ENCODE measurements at regions of chr15 and their contacts with region 1.

Region 1: DNA sequence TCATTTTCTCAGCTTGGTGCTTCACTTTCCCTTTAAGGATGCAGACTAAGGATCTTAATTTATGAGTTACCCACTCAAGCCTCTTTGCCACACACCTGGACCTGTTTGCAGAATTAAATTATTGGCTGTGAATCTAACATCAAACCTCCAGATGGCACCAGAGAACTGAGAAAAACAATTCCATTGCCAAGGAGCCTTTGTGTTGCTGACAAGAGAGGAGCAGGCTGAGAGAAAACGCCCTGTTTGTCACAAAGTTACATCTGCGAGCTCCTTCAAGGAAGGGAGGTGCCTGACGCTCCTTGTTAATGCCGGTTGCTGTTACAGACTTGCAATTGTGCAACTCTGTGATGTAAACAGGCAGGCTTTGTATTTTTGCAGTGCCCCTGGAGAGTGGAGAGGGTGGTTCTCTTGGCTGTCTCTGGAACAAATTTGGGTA is 36.3 kb upstream of the TMC3 start:
- DNase-seq: peak in 9 of 10 donors; percentile 5 to 77 (median 49)
- H3K4me3 ChIP-seq: peak overlapping the region in 1 of 59 donors; percentile 17
- H3K27ac ChIP-seq: peak overlapping the region in 18 of 59 donors; percentile 0 to 76 (median 39)
- H3K27me3 ChIP-seq: no peaks in the 10 kb centered on the region
- CTCF ChIP-seq: peak; percentile 27 to 81 (median 68)

Region 2: DNA sequence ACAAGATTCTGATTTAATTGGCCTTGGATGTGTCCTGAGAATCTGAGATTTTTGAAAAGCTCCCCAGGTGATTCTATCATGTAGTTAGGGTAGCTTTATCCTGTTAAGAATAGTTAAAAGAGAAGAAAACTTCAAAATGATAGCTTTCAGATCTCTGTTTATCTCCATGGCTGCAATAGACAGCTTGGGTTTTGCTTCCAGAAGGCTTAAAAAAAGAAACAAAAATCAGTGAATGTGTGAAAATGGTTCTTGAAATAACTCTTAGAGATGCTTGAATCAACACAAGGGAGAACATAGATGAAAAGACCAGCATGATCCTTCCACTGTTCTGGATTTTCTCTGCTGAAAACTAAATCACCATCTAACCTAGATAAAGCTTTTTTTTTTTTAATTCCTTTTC is 24.5 kb after region 1 on chr15:
- intact Hi-C with region 1: loop called in 1 of 2 experiments (anchors 2 kb)
- DNase-seq: no peak
- H3K4me3 ChIP-seq: no peak overlapping the region
- H3K27ac ChIP-seq: peak overlapping the region in 25 of 59 donors; percentile 2 to 74 (median 57)
- H3K27me3 ChIP-seq: no peaks in the 10 kb centered on the region
- CTCF ChIP-seq: no peak

Region 3: GRCh38 chr15:81473177-81473576 is 62.8 kb after region 1 on chr15:
- intact Hi-C with region 1: loop called in 1 of 2 experiments (anchors 2 kb)
- DNase-seq: peak in 1 of 10 donors; percentile 44
- H3K4me3 ChIP-seq: peak overlapping the region in 6 of 59 donors; percentile 2 to 35 (median 15)
- H3K27ac ChIP-seq: peak overlapping the region in 3 of 59 donors; percentile 8 to 41 (median 9)
- H3K27me3 ChIP-seq: peaks cover 0 to 4% (median 0%) of the 10 kb centered on the region in 45 donors
- CTCF ChIP-seq: peak in 1 of 56 donors; percentile 20